Activated B cell treated with CpG ODN at 0.5 μM for 24 hours (primary cell): ENCODE measurements at regions of chr13 and their contacts with region 1.

Region 1: GRCh38 chr13:25286969-25287961 is at the start of gene MTMR6:
- DNase-seq: peak; percentile 99
- ATAC-seq: peak; percentile 87
- H3K4me3 Mint-ChIP-seq: peak within 1 kb of the TSS; percentile 91
- H3K27ac Mint-ChIP-seq: peak within 1 kb of the TSS; percentile 95
- H3K4me1 Mint-ChIP-seq: peaks cover 40% of the 10 kb centered on the region
- H3K27me3 Mint-ChIP-seq: peaks cover 13% of the 10 kb centered on the region
- CTCF ChIP-seq: peak; percentile 95
- total RNA-seq, gene MTMR6: 18.3 and 19.8 TPM in 2 replicates

Region 2: GRCh38 chr13:24348797-24349515 is 938.3 kb before region 1 on chr13:
- CTCF ChIA-PET with region 1: no interaction called
- POLR2A ChIA-PET with region 1: no interaction called
- intact Hi-C with region 1: no loop called
- DNase-seq: no peak
- ATAC-seq: no peak
- H3K4me3 Mint-ChIP-seq: no peak overlapping the region
- H3K27ac Mint-ChIP-seq: no peak overlapping the region
- H3K4me1 Mint-ChIP-seq: no peaks in the 10 kb centered on the region
- H3K27me3 Mint-ChIP-seq: no peaks in the 10 kb centered on the region
- CTCF ChIP-seq: no peak

Region 3: DNA sequence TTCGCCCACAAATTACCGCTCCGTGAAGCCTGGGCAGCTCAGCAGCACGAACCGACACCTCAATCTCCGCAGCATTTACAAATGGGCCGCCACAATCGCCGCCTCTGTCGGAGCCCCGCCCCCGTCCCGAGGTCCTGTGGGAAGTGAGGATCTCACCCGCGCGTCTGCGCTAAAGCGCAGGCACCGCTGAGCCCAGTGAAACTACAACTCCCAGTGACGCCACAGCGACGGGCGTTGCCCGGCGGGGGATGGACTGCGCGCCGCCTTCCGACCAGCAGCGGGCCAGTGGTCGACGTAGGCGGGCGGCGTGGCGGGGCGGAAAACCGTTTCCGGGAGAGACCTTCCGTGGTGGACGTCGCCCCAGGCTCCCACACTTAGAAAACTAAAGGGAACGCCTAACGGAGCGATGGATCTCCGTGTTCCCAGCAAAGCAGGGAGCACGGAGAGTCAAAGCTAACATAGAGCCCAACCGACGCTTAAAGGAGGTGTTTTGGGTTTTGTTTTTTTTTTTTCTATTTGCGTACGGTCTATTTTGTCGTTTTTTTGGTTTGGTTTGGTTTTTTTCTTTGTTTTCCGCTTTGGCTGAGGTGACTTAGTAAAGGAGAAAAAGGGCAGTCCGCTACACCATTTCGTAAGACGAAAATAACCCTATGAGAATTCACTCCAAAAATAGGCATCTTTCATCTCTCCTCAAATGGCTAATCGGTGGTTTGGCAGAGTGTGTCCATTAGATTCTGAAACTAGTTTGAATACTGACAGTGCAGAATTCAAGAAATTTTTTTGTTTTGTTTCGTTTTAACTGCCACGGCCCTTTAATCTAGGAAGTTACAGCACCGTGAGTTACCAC is 364.3 kb before region 1 on chr13:
- CTCF ChIA-PET with region 1: no interaction called
- POLR2A ChIA-PET with region 1: interaction called, 5 read pairs
- intact Hi-C with region 1: loop called (anchors 1 kb)
- DNase-seq: peak; percentile 91
- ATAC-seq: peak; percentile 97
- H3K4me3 Mint-ChIP-seq: peak overlapping the region; percentile 91
- H3K27ac Mint-ChIP-seq: peak overlapping the region; percentile 97
- H3K4me1 Mint-ChIP-seq: peaks cover 16% of the 10 kb centered on the region
- H3K27me3 Mint-ChIP-seq: no peaks in the 10 kb centered on the region
- CTCF ChIP-seq: no peak

Region 4: DNA sequence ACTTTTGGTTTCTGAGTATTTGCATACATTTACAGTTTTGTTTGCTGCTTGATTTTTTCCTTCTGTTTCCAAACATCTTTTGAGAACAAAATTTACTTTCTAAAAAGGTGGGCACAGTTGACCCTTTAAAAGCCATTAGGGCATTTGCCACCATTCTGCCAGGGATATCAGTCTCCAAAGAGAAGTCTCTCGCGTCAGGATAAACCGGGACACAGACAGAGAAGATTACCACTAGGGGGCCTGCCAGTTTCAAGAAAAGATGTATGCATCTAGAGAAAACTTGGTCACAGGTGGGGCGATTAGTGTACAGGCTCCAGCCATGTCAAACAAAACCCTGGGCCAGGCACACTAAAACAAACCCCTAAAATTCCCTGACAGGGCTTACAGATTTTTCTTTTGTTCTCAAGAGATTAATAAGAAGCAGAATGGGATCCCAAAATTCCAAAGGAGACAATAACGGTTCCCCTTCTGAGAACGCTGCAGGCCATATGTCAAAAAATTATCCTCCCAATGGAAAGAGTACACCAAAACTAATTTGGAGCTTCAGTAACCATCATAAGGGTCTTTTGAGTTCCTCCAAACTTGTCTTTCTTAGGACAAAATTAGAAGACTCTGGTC is 202.0 kb before region 1 on chr13:
- CTCF ChIA-PET with region 1: no interaction called
- POLR2A ChIA-PET with region 1: no interaction called
- intact Hi-C with region 1: loop called (anchors 1 kb)
- DNase-seq: no peak
- ATAC-seq: no peak
- H3K4me3 Mint-ChIP-seq: no peak overlapping the region
- H3K27ac Mint-ChIP-seq: no peak overlapping the region
- H3K4me1 Mint-ChIP-seq: peaks cover 3% of the 10 kb centered on the region
- H3K27me3 Mint-ChIP-seq: peaks cover 6% of the 10 kb centered on the region
- CTCF ChIP-seq: no peak

Region 5: GRCh38 chr13:25232937-25233515 is 54.2 kb before region 1 on chr13:
- CTCF ChIA-PET with region 1: no interaction called
- POLR2A ChIA-PET with region 1: no interaction called
- intact Hi-C with region 1: loop called (anchors 1 kb)
- DNase-seq: no peak
- ATAC-seq: peak; percentile 54
- H3K4me3 Mint-ChIP-seq: no peak overlapping the region
- H3K27ac Mint-ChIP-seq: no peak overlapping the region
- H3K4me1 Mint-ChIP-seq: peaks cover 19% of the 10 kb centered on the region
- H3K27me3 Mint-ChIP-seq: peaks cover 17% of the 10 kb centered on the region
- CTCF ChIP-seq: no peak

Region 6: DNA sequence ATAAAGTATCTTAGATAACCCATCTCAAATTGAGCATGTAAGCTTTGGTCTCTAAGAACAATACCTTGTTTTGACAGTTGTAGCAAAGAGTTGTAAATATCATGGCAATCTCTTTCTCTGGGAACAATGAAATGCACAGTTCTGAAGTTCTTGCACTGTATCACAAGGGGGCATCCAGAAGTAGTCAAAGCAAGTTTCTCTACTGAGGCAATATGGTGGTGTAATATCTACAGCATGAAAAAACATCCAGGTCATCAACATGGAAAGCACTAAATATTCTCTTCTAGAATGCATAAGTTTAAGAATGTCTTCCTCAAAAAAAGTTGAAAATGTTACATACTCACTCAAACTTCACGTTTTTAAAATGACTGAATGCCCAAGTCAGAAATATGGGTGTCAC is 19.6 kb before region 1 on chr13:
- CTCF ChIA-PET with region 1: no interaction called
- POLR2A ChIA-PET with region 1: interaction called, 3 read pairs
- intact Hi-C with region 1: loop called (anchors 1 kb)
- DNase-seq: no peak
- ATAC-seq: peak; percentile 58
- H3K4me3 Mint-ChIP-seq: no peak overlapping the region
- H3K27ac Mint-ChIP-seq: no peak overlapping the region
- H3K4me1 Mint-ChIP-seq: no peaks in the 10 kb centered on the region
- H3K27me3 Mint-ChIP-seq: no peaks in the 10 kb centered on the region
- CTCF ChIP-seq: no peak

Region 7: GRCh38 chr13:26253787-26254582 is 966.7 kb after region 1 on chr13 and contains the start of gene CDK8:
- CTCF ChIA-PET with region 1: no interaction called
- POLR2A ChIA-PET with region 1: no interaction called
- intact Hi-C with region 1: loop called (anchors 5 kb)
- DNase-seq: peak; percentile 87
- ATAC-seq: peak; percentile 86
- H3K4me3 Mint-ChIP-seq: peak within 1 kb of the TSS; percentile 92
- H3K27ac Mint-ChIP-seq: peak within 1 kb of the TSS; percentile 88
- H3K4me1 Mint-ChIP-seq: peaks cover 36% of the 10 kb centered on the region
- H3K27me3 Mint-ChIP-seq: no peaks in the 10 kb centered on the region
- CTCF ChIP-seq: no peak
- total RNA-seq, gene CDK8: 10.9 and 12.8 TPM in 2 replicates